Activated B cell treated with CpG ODN at 0.5 μM for 24 hours (primary cell): ENCODE measurements at regions of chr11 and their contacts with region 1.

Region 1: GRCh38 chr11:86068951-86069407 is at the start of gene PICALM:
- DNase-seq: peak; percentile 94
- ATAC-seq: peak; percentile 82
- H3K4me3 Mint-ChIP-seq: peak within 1 kb of the TSS; percentile 97
- H3K27ac Mint-ChIP-seq: peak within 1 kb of the TSS; percentile 95
- H3K4me1 Mint-ChIP-seq: peaks cover 50% of the 10 kb centered on the region
- H3K27me3 Mint-ChIP-seq: no peaks in the 10 kb centered on the region
- CTCF ChIP-seq: no peak
- total RNA-seq, gene PICALM: 118 and 139 TPM in 2 replicates

Region 2: DNA sequence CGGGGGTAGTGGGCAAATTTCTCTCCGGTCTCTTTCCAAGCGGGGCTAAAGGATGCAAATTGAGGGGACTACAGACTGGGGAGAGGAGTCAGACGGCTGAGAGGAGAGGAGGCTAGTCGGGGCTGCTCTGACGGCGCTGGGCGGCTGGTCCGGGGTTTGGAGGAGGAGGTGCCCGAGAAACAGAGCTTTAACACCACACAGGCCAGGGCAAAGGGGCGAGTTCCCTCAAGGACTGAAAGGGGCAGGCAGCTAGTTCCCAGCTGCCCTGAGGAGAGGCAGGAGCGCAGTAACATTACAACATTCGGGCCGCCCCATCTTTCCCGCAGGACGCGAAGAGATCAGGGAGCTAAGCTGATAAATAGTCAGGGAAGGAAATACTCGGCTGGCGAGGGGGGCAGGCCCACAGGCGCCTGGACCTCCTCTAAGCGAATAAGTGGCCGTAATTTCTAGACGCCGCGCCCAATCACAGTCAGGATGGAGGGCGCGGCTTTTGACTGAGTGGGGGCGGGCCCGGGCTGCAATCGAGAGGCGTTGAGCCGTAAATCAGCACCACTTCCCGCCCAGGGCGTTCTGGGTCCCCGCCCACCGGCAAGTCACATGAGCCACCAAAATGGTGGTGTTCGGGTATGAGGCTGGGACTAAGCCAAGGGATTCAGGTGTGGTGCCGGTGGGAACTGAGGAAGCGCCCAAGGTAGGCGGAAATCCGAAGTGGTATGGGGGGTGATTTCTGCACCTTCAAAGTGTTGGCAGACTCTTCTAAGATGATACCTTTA is 440.8 kb before region 1 on chr11 and contains the start of gene TMEM126B:
- CTCF ChIA-PET with region 1: no interaction called
- POLR2A ChIA-PET with region 1: interaction called, 8 read pairs
- intact Hi-C with region 1: loop called (anchors 2 kb)
- DNase-seq: peak; percentile 89
- ATAC-seq: peak; percentile 98
- H3K4me3 Mint-ChIP-seq: peak within 1 kb of the TSS; percentile 99
- H3K27ac Mint-ChIP-seq: peak within 1 kb of the TSS; percentile 94
- H3K4me1 Mint-ChIP-seq: peaks cover 28% of the 10 kb centered on the region
- H3K27me3 Mint-ChIP-seq: peaks cover 2% of the 10 kb centered on the region
- CTCF ChIP-seq: no peak
- total RNA-seq, gene TMEM126B: 35.5 and 43.4 TPM in 2 replicates

Region 3: DNA sequence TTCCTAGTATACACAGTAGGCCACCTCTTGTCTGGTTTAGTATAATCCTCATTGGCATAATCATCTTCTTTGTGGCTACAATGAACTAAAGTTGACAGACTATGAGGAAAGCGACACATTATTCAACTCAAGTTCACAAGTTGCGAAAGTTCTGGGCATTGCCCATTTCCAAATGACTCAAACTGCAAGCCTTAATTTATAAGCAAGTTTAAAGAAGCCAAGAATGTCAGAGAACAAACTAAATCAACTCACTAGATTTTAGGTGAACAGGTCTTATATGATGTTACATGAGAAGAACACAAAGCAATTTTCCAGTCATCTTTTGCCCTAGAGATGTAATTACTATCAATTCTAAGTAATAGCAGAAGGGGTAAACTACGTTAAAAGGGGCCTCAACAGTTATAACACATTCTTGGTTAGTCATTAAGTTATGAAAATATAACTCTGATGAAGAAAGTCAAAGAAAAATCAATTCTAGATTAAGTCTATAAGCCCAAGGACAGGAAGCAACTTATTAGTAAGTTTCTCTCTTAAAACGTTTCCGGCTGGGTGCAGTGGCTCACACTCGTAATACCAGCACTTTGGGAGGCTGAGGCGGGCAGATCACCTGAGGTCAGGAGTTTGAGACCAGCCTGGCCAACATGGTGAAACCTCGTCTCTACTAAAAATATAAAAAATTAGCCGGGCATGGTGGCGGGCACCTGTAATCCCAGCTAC is 21.5 kb before region 1 on chr11:
- CTCF ChIA-PET with region 1: interaction called, 28 read pairs
- POLR2A ChIA-PET with region 1: interaction called, 22 read pairs
- intact Hi-C with region 1: loop called (anchors 1 kb)
- DNase-seq: no peak
- ATAC-seq: no peak
- H3K4me3 Mint-ChIP-seq: peak overlapping the region; percentile 42
- H3K27ac Mint-ChIP-seq: peak overlapping the region; percentile 68
- H3K4me1 Mint-ChIP-seq: peaks cover 95% of the 10 kb centered on the region
- H3K27me3 Mint-ChIP-seq: no peaks in the 10 kb centered on the region
- CTCF ChIP-seq: no peak

Region 4: GRCh38 chr11:86160546-86161149 is 91.7 kb after region 1 on chr11:
- CTCF ChIA-PET with region 1: interaction called, 4 read pairs
- POLR2A ChIA-PET with region 1: interaction called, 15 read pairs
- intact Hi-C with region 1: no loop called
- DNase-seq: no peak
- ATAC-seq: no peak
- H3K4me3 Mint-ChIP-seq: no peak overlapping the region
- H3K27ac Mint-ChIP-seq: no peak overlapping the region
- H3K4me1 Mint-ChIP-seq: peaks cover 28% of the 10 kb centered on the region
- H3K27me3 Mint-ChIP-seq: no peaks in the 10 kb centered on the region
- CTCF ChIP-seq: no peak

Region 5: DNA sequence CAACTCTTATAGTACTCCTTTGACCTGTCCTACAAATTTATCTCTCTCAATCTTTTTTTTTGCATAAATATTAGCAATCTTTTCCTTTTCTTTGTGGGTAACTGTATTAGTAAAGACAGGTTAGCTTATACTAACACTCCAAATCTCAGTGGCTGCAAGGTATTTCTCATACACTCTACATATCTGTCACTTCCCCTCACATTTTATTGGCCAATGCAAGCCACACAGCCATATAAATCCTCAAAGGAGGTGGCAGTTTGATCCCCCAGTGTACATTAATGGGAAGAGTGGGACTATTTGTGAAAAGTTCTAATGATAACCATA is 133.0 kb after region 1 on chr11:
- CTCF ChIA-PET with region 1: interaction called, 8 read pairs
- POLR2A ChIA-PET with region 1: interaction called, 37 read pairs
- intact Hi-C with region 1: no loop called
- DNase-seq: no peak
- ATAC-seq: peak; percentile 46
- H3K4me3 Mint-ChIP-seq: no peak overlapping the region
- H3K27ac Mint-ChIP-seq: no peak overlapping the region
- H3K4me1 Mint-ChIP-seq: peaks cover 9% of the 10 kb centered on the region
- H3K27me3 Mint-ChIP-seq: no peaks in the 10 kb centered on the region
- CTCF ChIP-seq: no peak

Region 6: GRCh38 chr11:86302100-86302793 is 233.3 kb after region 1 on chr11 and contains the start of gene HIKESHI:
- CTCF ChIA-PET with region 1: no interaction called
- POLR2A ChIA-PET with region 1: interaction called, 16 read pairs
- intact Hi-C with region 1: loop called (anchors 1 kb)
- DNase-seq: peak; percentile 72
- ATAC-seq: peak; percentile 98
- H3K4me3 Mint-ChIP-seq: peak within 1 kb of the TSS; percentile 99
- H3K27ac Mint-ChIP-seq: peak within 1 kb of the TSS; percentile 94
- H3K4me1 Mint-ChIP-seq: peaks cover 27% of the 10 kb centered on the region
- H3K27me3 Mint-ChIP-seq: no peaks in the 10 kb centered on the region
- CTCF ChIP-seq: no peak
- total RNA-seq, gene HIKESHI: 33.8 and 35.6 TPM in 2 replicates